ENCODE measurements at regions of chr5 and their contacts with region 1.

Region 1: GRCh38 chr5:149381987-149382340 is 2.9 kb upstream of the IL17B start:
- DNase-seq: no peak
- ATAC-seq: peak; percentile 97
- H3K4me3 ChIP-seq: no peak overlapping the region
- H3K27ac ChIP-seq: no peak overlapping the region
- H3K4me1 ChIP-seq: no peaks in the 10 kb centered on the region
- H3K27me3 ChIP-seq: peaks cover 0 to 2% of the 10 kb centered on the region in 2 experiments; a peak in 2 of 4 replicates
- CTCF ChIP-seq: peak; percentile 83 to 90 (median 87)
- EP300 ChIP-seq: no peak
- POLR2A ChIP-seq: no peak
- RAD21 ChIP-seq: peak; percentile 69

Region 2: DNA sequence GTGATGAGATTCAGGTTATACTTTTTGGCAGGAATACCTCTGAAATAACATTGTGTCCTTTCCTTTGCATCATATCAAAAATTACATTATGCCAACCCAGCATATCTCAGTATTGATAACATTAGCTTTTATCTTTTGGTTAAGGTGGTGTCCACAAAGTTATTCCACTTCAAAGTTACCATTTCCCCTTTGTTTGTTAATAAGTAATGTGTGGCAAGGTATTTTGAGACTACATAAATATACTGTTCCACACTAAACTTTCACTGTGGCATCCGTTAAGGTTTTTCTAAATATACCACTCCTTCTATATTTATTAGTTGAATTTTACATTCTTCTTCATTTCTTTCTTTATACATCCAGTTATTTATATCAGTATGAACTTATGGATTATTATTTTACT is 185.3 kb after region 1 on chr5:
- CTCF ChIA-PET with region 1: interaction called, 35 read pairs
- POLR2A ChIA-PET with region 1: no interaction called
- RAD21 ChIA-PET with region 1: interaction called, 7 read pairs
- SMC1A ChIA-PET with region 1: interaction called, 7 read pairs
- in situ Hi-C with region 1: no loop called
- intact Hi-C with region 1: loop called (anchors 1 kb)
- DNase-seq: no peak
- ATAC-seq: peak; percentile 45
- H3K4me3 ChIP-seq: no peak overlapping the region
- H3K27ac ChIP-seq: no peak overlapping the region
- H3K4me1 ChIP-seq: no peaks in the 10 kb centered on the region
- H3K27me3 ChIP-seq: no peaks in the 10 kb centered on the region
- CTCF ChIP-seq: no peak
- EP300 ChIP-seq: no peak
- POLR2A ChIP-seq: no peak
- RAD21 ChIP-seq: no peak

Measured in GM12878 (cell line).